H1 (cell line): ENCODE measurements at regions of chr19 and their contacts with region 1.

Region 1: GRCh38 chr19:15154002-15154612 is 46.7 kb downstream of the NOTCH3 start:
- DNase-seq: peak in 1 of 2 experiments; percentile 84
- H3K4me3 ChIP-seq: no peak overlapping the region
- H3K27ac ChIP-seq: no peak overlapping the region
- H3K4me1 ChIP-seq: no peaks in the 10 kb centered on the region; a peak in 1 of 7 replicates
- H3K27me3 ChIP-seq: no peaks in the 10 kb centered on the region
- CTCF ChIP-seq: peak; percentile 53 to 83 (median 63)
- EP300 ChIP-seq: no peak
- POLR2A ChIP-seq: no peak
- RAD21 ChIP-seq: peak; percentile 63 to 74

Region 2: DNA sequence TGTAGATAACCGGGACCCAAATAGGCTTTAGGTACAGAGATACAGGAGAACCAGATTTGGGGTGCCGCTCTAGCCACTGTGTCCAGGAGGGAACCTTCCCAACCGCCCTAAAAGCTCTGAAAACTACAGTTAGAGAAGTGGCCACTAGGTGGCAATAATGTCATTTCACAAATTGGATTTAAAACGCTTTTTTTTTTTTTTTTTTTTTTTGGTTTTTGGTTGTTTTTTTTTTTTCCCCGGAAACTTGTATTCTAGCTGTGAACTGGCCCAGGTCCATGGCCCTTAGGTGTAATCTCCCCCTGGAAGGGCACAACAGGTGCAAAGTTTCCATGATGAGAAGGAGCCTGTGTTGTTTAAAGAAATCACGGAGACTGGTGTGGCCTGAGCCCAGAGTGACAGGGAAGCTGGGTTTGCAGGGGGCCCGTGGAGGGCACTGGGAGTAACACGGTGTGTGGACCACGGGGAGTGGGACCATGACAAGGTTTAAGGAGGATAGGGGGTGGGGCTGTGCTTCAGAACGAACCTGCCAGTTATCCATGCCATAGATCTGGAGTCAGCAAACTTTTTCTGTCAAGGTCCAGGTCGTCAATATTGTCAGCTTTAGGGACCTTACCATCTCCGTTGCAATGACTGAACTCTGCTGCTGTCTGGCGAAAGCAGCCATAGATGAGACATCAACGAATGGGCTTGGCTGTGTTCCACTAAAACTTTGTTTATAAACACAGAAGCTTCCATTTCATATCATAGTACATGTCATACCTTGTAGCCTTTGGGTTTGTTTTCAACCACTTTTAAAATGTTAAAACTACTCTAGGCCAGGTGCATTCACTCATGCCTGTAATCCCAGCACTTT is 62.0 kb before region 1 on chr19:
- CTCF ChIA-PET with region 1: interaction called, 42 read pairs
- POLR2A ChIA-PET with region 1: no interaction called
- DNase-seq: peak in 1 of 2 experiments; percentile 54
- H3K4me3 ChIP-seq: no peak overlapping the region
- H3K27ac ChIP-seq: no peak overlapping the region
- H3K4me1 ChIP-seq: no peaks in the 10 kb centered on the region
- H3K27me3 ChIP-seq: peaks cover 0 to 3% (median 0%) of the 10 kb centered on the region in 4 experiments; a peak in 1 of 7 replicates
- CTCF ChIP-seq: peak in 2 of 3 experiments; percentile 50 to 52; a peak in 2 of 4 replicates
- EP300 ChIP-seq: no peak
- POLR2A ChIP-seq: no peak
- RAD21 ChIP-seq: peak; percentile 69 to 73

Region 3: GRCh38 chr19:15125232-15126067 is 28.7 kb before region 1 on chr19:
- CTCF ChIA-PET with region 1: interaction called, 39 read pairs
- POLR2A ChIA-PET with region 1: interaction called, 10 read pairs
- DNase-seq: peak; percentile 97 to 98
- H3K4me3 ChIP-seq: peak overlapping the region; percentile 68 to 90 (median 82)
- H3K27ac ChIP-seq: peak overlapping the region; percentile 96
- H3K4me1 ChIP-seq: peaks cover 0 to 9% (median 2%) of the 10 kb centered on the region in 4 experiments; a peak in 5 of 7 replicates
- H3K27me3 ChIP-seq: no peaks in the 10 kb centered on the region
- CTCF ChIP-seq: no peak
- EP300 ChIP-seq: no peak
- POLR2A ChIP-seq: peak; percentile 58 to 88
- RAD21 ChIP-seq: 0 out of 4 replicates have a peak, but pooled peaks of 1 of the 2 experiments have one; percentile 1

Region 4: DNA sequence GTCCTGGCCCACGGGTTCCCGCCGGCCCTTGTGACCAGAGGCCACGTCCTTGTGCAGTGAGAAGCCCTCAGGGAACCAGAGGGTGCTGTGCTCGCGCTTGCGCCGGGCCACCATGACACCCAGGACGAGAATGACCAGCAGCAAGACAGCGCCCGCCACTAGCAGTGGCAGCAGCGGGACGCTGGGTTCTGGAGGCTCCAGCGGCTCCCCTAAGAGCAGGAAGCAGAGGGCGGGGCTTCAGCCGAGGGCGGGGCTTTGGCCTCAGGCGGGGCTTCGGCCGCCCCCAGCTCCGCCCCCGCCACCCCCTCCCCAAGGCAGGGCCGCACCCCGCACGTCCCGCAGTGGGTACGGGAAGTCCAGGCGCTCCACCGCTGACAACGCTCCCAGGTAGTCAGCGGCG is 16.2 kb after region 1 on chr19:
- CTCF ChIA-PET with region 1: interaction called, 31 read pairs
- POLR2A ChIA-PET with region 1: interaction called, 19 read pairs
- DNase-seq: peak in 1 of 2 experiments; percentile 85
- H3K4me3 ChIP-seq: no peak overlapping the region
- H3K27ac ChIP-seq: peak overlapping the region; percentile 38; the same call in 1 of the 2 replicates
- H3K4me1 ChIP-seq: peaks cover 0 to 5% (median 0%) of the 10 kb centered on the region in 4 experiments; a peak in 1 of 7 replicates
- H3K27me3 ChIP-seq: no peaks in the 10 kb centered on the region
- CTCF ChIP-seq: no peak
- EP300 ChIP-seq: no peak
- POLR2A ChIP-seq: no peak
- RAD21 ChIP-seq: no peak

Region 5: GRCh38 chr19:15234043-15234873 is 80.2 kb after region 1 on chr19:
- CTCF ChIA-PET with region 1: interaction called, 11 read pairs
- POLR2A ChIA-PET with region 1: interaction called, 3 read pairs
- DNase-seq: no peak
- H3K4me3 ChIP-seq: no peak overlapping the region
- H3K27ac ChIP-seq: no peak overlapping the region
- H3K4me1 ChIP-seq: peaks cover 2 to 9% (median 5%) of the 10 kb centered on the region in 4 experiments; a peak in 6 of 7 replicates
- H3K27me3 ChIP-seq: no peaks in the 10 kb centered on the region
- CTCF ChIP-seq: no peak
- EP300 ChIP-seq: no peak
- POLR2A ChIP-seq: peak in 1 of 2 experiments; percentile 32; a peak in 1 of 3 replicates
- RAD21 ChIP-seq: no peak